ENCODE measurements at regions of chr5 and their contacts with region 1.

Region 1: DNA sequence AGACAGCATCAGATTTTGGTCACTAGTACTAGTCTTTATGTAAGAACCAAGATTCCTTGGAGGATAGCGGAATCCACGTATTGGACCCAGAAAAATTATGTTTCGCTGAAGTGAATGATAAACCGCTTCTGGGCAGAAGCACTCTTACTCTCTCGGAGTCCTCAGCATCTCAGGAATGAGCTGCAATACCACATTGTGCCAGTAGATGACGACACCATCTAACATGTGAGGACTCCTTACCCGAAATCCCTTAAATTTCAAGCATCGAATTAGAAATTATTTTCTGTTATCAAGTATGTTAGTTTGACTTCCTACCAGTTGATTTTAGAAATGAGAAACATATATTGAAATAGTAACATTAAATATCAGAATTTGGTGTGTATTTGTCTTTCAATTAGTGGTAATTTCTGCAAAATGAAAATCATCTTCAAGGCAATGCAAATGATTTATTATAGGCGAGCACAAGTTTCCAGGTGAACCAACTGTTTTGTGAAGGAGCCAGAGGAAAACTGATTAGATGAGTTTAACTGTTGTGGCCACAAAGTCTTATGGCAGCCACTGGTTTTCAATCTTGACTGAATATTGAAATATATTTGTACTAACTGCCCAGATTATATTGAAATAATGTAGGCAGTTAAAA is 66.0 kb upstream of the CAMK4 start:
- DNase-seq: peak; percentile 77
- H3K4me3 Mint-ChIP-seq: no peak overlapping the region
- H3K27ac Mint-ChIP-seq: no peak overlapping the region
- H3K4me1 Mint-ChIP-seq: peaks cover 2% of the 10 kb centered on the region
- H3K27me3 Mint-ChIP-seq: peaks cover 3% of the 10 kb centered on the region

Region 2: DNA sequence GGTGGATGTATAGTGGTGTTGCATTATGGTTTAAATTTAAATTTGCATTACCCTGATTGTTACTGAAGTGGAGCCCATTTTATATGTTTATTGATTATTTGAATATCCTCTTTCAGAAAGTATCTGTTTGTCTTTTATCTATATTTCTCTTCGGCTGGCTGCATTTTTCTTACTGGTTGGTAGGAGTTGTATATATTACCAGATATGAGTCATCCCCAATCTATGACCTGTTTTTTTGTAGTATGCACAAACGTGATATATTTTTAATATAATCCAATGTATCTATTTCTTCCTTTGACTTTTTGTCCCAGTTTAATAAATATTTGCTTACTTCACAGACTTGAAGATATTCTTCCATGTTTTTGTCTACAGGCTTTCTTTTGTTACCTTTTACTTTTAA is 36.7 kb after region 1 on chr5:
- CTCF ChIA-PET with region 1: no interaction called
- POLR2A ChIA-PET with region 1: no interaction called
- DNase-seq: no peak
- H3K4me3 Mint-ChIP-seq: no peak overlapping the region
- H3K27ac Mint-ChIP-seq: no peak overlapping the region
- H3K4me1 Mint-ChIP-seq: peaks cover 2% of the 10 kb centered on the region
- H3K27me3 Mint-ChIP-seq: peaks cover 19% of the 10 kb centered on the region

Region 3: DNA sequence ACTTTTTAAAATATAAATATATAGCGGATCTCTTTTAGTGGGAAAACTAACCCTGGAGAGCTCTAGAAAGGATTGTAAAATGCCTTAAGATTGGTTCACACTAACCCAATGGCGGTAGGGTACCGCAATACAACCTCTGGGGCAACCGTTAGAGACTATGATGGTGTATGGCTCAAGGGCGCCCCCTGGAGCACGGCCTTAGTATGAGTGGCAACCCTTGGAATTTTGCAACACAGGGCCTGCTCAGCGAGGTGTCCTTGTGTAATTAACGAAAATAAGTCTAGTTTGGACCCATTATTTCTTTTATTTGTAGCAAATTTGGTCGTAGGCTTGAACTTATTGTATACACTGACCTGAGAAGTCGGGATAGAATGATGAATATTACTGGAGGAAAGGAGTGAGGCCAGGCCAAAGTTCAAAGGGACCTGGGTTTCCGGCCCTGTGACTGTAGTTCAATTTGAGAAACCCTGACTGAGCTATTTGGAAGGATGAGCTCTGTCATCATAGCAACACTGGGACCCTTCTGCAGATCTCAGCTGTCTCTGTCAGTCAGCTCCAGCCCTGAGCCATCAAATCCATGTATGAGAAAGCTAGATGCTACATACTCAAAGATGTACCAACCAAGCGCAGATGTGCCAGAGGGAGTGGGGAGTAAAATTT is 120.8 kb after region 1 on chr5:
- CTCF ChIA-PET with region 1: interaction called, 144 read pairs
- POLR2A ChIA-PET with region 1: interaction called, 4 read pairs
- DNase-seq: peak; percentile 87
- H3K4me3 Mint-ChIP-seq: no peak overlapping the region
- H3K27ac Mint-ChIP-seq: no peak overlapping the region
- H3K4me1 Mint-ChIP-seq: peaks cover 10% of the 10 kb centered on the region
- H3K27me3 Mint-ChIP-seq: no peaks in the 10 kb centered on the region